ENCODE measurements at regions of chr17 and their contacts with region 1.

Region 1: GRCh38 chr17:32269377-32269776 is 3.7 kb downstream of the RHBDL3 start:
- DNase-seq: no peak
- ATAC-seq: no peak
- H3K4me3 ChIP-seq: no peak overlapping the region
- H3K27ac ChIP-seq: no peak overlapping the region
- H3K4me1 ChIP-seq: no peaks in the 10 kb centered on the region; the same call in 1 of the 2 replicates
- H3K27me3 ChIP-seq: peaks cover 63% of the 10 kb centered on the region
- CTCF ChIP-seq: no peak
- POLR2A ChIP-seq: no peak
- RAD21 ChIP-seq: no peak

Region 2: DNA sequence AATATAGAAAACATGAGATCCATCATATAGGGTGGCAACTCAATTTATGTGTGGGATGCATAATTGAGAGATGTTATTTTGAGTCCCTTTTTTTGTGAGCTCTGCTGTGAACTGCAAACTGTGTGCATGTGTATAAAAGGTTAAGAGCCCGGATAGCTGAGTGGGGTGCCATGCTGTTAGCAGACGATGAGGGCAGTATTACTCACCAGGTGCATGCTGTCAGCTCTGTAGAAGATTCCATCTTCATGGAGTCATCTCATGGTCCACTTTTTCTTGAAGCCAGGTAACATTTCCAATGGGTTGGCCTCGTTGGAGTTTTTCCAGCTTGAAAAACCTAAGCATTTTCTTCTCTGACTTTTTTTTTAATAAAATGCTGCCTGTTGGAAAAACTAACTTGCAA is 46.8 kb before region 1 on chr17:
- CTCF ChIA-PET with region 1: no interaction called
- POLR2A ChIA-PET with region 1: interaction called, 13 read pairs
- dilution Hi-C with region 1: no loop called
- in situ Hi-C with region 1: no loop called
- intact Hi-C with region 1: no loop called
- DNase-seq: peak; percentile 15
- ATAC-seq: no peak
- H3K4me3 ChIP-seq: no peak overlapping the region
- H3K27ac ChIP-seq: no peak overlapping the region
- H3K4me1 ChIP-seq: no peaks in the 10 kb centered on the region
- H3K27me3 ChIP-seq: no peaks in the 10 kb centered on the region
- CTCF ChIP-seq: no peak
- POLR2A ChIP-seq: no peak
- RAD21 ChIP-seq: no peak

Region 3: GRCh38 chr17:32335687-32336086 is 66.3 kb after region 1 on chr17:
- CTCF ChIA-PET with region 1: no interaction called
- POLR2A ChIA-PET with region 1: no interaction called
- dilution Hi-C with region 1: no loop called
- in situ Hi-C with region 1: no loop called
- intact Hi-C with region 1: no loop called
- DNase-seq: peak; percentile 58
- ATAC-seq: peak; percentile 78
- H3K4me3 ChIP-seq: no peak overlapping the region
- H3K27ac ChIP-seq: no peak overlapping the region
- H3K4me1 ChIP-seq: no peaks in the 10 kb centered on the region
- H3K27me3 ChIP-seq: no peaks in the 10 kb centered on the region
- CTCF ChIP-seq: no peak
- POLR2A ChIP-seq: no peak
- RAD21 ChIP-seq: no peak

Measured in IMR-90 (cell line).